GM12878 (cell line): ENCODE measurements at regions of chr4 and their contacts with region 1.

Region 1: DNA sequence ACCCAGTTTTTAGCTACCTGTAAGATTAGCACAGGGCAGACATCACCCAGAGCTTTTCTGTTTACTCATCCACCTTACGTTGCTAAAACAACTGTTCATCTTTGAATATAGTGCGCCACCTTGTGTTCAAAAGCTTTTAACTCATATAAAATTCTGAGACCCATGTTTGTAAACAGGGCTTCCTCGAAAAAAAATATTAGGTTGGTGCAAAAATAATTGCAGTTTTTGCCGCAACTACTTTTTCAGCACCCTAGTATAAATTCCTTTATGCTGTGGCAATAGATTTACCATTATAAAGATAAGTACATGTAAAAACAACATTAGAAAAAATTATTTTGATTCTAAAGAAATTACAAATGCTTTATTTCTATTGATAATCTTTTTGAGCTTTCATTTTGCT is 147.9 kb downstream of the LRBA start:
- DNase-seq: peak; percentile 41
- ATAC-seq: peak; percentile 96
- H3K4me3 ChIP-seq: no peak overlapping the region
- H3K27ac ChIP-seq: no peak overlapping the region
- H3K4me1 ChIP-seq: no peaks in the 10 kb centered on the region
- H3K27me3 ChIP-seq: no peaks in the 10 kb centered on the region
- CTCF ChIP-seq: peak; percentile 37 to 59 (median 46); a peak in 5 of 6 replicates
- EP300 ChIP-seq: no peak
- POLR2A ChIP-seq: no peak
- RAD21 ChIP-seq: peak; percentile 86

Region 2: GRCh38 chr4:149980941-149981340 is 886.2 kb before region 1 on chr4:
- CTCF ChIA-PET with region 1: no interaction called
- POLR2A ChIA-PET with region 1: no interaction called
- RAD21 ChIA-PET with region 1: no interaction called
- SMC1A ChIA-PET with region 1: interaction called, 3 read pairs
- in situ Hi-C with region 1: loop called (anchors 10 kb)
- intact Hi-C with region 1: no loop called
- DNase-seq: no peak
- ATAC-seq: peak; percentile 83
- H3K4me3 ChIP-seq: no peak overlapping the region
- H3K27ac ChIP-seq: no peak overlapping the region
- H3K4me1 ChIP-seq: no peaks in the 10 kb centered on the region
- H3K27me3 ChIP-seq: no peaks in the 10 kb centered on the region; a peak in 1 of 4 replicates
- CTCF ChIP-seq: peak; percentile 73 to 78 (median 75)
- EP300 ChIP-seq: no peak
- POLR2A ChIP-seq: no peak
- RAD21 ChIP-seq: peak; percentile 70

Region 3: DNA sequence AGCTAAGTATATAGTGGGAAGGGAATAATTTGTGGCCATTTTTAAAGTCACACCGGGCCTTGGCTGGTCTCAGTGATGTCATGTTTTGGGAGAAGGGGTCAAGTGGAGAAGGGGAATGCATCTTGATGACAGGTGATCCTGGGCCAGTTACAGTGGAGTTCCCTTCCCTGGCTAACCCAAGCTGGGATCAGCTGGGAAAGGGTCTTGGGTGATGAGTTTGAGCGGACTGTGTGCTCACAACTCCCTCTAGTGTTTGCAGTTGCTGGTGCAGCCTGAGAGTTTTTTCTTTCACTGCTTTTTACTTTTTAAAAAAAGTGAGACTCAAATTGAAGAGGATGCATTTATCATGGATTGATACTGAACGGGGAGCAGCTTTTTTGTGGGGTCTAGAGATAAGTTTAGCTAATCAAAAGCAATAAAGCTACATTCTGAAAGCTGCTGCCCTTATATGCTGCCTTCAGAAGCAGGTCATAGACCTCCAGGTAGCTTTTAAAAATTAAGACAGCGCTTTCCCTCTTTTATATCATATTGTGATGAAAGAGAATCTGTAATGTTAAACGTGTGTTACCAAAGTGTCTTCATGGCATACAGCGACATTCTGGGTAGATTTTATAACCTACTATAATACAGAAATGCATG is 624.2 kb before region 1 on chr4:
- CTCF ChIA-PET with region 1: interaction called, 27 read pairs
- POLR2A ChIA-PET with region 1: no interaction called
- RAD21 ChIA-PET with region 1: interaction called, 22 read pairs
- SMC1A ChIA-PET with region 1: interaction called, 7 read pairs
- in situ Hi-C with region 1: no loop called
- intact Hi-C with region 1: no loop called
- DNase-seq: no peak
- ATAC-seq: peak; percentile 65
- H3K4me3 ChIP-seq: no peak overlapping the region
- H3K27ac ChIP-seq: no peak overlapping the region
- H3K4me1 ChIP-seq: no peaks in the 10 kb centered on the region
- H3K27me3 ChIP-seq: no peaks in the 10 kb centered on the region
- CTCF ChIP-seq: peak; percentile 82 to 89 (median 84)
- EP300 ChIP-seq: no peak
- POLR2A ChIP-seq: no peak
- RAD21 ChIP-seq: peak; percentile 77

Region 4: GRCh38 chr4:150305995-150306394 is 561.2 kb before region 1 on chr4:
- CTCF ChIA-PET with region 1: interaction called, 107 read pairs
- POLR2A ChIA-PET with region 1: no interaction called
- RAD21 ChIA-PET with region 1: interaction called, 17 read pairs
- SMC1A ChIA-PET with region 1: interaction called, 31 read pairs
- in situ Hi-C with region 1: no loop called
- intact Hi-C with region 1: no loop called
- DNase-seq: no peak
- ATAC-seq: no peak
- H3K4me3 ChIP-seq: no peak overlapping the region
- H3K27ac ChIP-seq: no peak overlapping the region
- H3K4me1 ChIP-seq: no peaks in the 10 kb centered on the region
- H3K27me3 ChIP-seq: no peaks in the 10 kb centered on the region
- CTCF ChIP-seq: no peak
- EP300 ChIP-seq: no peak
- POLR2A ChIP-seq: no peak
- RAD21 ChIP-seq: no peak

Region 5: GRCh38 chr4:150849016-150849415 is 18.1 kb before region 1 on chr4:
- CTCF ChIA-PET with region 1: interaction called, 44 read pairs
- POLR2A ChIA-PET with region 1: no interaction called
- RAD21 ChIA-PET with region 1: interaction called, 4 read pairs
- SMC1A ChIA-PET with region 1: interaction called, 17 read pairs
- in situ Hi-C with region 1: no loop called
- intact Hi-C with region 1: no loop called
- DNase-seq: no peak
- ATAC-seq: no peak
- H3K4me3 ChIP-seq: no peak overlapping the region
- H3K27ac ChIP-seq: no peak overlapping the region
- H3K4me1 ChIP-seq: no peaks in the 10 kb centered on the region
- H3K27me3 ChIP-seq: no peaks in the 10 kb centered on the region
- CTCF ChIP-seq: no peak
- EP300 ChIP-seq: no peak
- POLR2A ChIP-seq: no peak
- RAD21 ChIP-seq: no peak

Region 6: DNA sequence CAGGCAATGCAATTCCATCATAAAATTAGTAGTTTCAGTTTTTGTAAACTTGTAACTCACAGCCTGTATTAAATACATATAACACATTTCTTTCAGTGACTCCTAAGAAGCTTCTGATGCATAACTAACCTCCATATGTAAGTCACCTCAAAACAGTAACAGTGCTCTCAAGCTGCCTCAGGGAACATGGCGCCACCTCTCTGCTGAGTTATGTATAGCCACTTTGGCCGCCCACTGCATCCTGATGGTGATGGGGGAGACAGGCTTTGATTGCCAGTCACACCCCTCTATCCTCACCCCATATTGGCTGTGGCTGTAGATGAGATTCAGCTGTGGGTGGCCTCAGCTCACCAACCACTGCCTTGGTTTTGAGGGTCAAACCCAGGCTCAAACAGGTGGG is 93.7 kb after region 1 on chr4:
- CTCF ChIA-PET with region 1: interaction called, 45 read pairs
- POLR2A ChIA-PET with region 1: no interaction called
- RAD21 ChIA-PET with region 1: interaction called, 14 read pairs
- SMC1A ChIA-PET with region 1: interaction called, 24 read pairs
- in situ Hi-C with region 1: no loop called
- intact Hi-C with region 1: no loop called
- DNase-seq: no peak
- ATAC-seq: peak; percentile 86
- H3K4me3 ChIP-seq: no peak overlapping the region
- H3K27ac ChIP-seq: no peak overlapping the region
- H3K4me1 ChIP-seq: peaks cover 3% of the 10 kb centered on the region
- H3K27me3 ChIP-seq: no peaks in the 10 kb centered on the region
- CTCF ChIP-seq: peak; percentile 34 to 47 (median 45); a peak in 5 of 6 replicates
- EP300 ChIP-seq: no peak
- POLR2A ChIP-seq: no peak
- RAD21 ChIP-seq: peak; percentile 46; the same call in 1 of the 2 replicates